ENCODE measurements at regions of chr2 and their contacts with region 1.

Region 1: DNA sequence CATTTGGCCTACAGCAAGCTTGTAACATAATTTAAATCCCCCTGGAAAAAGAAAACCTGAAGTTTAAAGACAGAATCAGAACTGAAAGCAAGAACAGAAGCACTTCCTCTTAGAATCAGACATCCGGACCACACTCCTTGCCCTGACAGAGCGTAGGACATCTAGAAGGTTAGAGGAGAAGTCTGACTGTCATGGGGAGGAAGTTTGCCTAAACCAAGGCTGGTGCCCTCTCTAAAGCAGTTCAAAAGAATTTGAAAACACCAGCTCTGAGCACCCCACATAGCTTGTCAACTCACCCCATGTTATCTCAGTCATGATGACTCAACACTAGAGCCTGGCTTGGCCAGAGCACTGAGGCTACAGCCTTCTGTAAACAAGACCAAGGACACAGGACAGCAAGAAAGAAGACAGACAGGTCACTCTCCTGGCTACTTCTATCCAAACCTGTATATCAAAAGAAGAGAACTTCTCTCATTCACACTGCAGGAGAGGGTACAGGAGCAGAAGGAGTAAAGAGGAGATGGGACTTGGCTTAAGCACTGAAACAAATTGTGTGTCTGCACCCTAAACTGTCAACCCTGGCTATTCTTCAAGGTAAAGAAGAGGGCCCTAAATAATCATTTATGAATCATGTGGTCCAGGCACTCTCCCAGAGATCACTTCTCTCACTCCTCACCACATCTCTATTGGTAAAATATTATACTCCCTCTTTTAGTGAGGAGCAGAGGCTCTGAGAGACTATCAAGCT is 198.6 kb downstream of the MEMO1 start:
- DNase-seq: no peak
- ATAC-seq: peak; percentile 63 to 86 (median 80)
- H3K4me3 ChIP-seq: no peak overlapping the region
- H3K27ac ChIP-seq: peak overlapping the region; percentile 89
- H3K4me1 ChIP-seq: peaks cover 38% of the 10 kb centered on the region
- H3K27me3 ChIP-seq: no peaks in the 10 kb centered on the region
- CTCF ChIP-seq: no peak

Region 2: GRCh38 chr2:31764169-31764568 is 48.1 kb before region 1 on chr2:
- intact Hi-C with region 1: loop called in 1 of 2 experiments (anchors 10 kb)
- DNase-seq: no peak
- ATAC-seq: peak; percentile 54 to 97 (median 92)
- H3K4me3 ChIP-seq: no peak overlapping the region
- H3K27ac ChIP-seq: peak overlapping the region; percentile 41
- H3K4me1 ChIP-seq: peaks cover 8% of the 10 kb centered on the region
- H3K27me3 ChIP-seq: no peaks in the 10 kb centered on the region
- CTCF ChIP-seq: no peak